T-cell (primary cell): ENCODE measurements at regions of chr1 and their contacts with region 1.

Region 1: DNA sequence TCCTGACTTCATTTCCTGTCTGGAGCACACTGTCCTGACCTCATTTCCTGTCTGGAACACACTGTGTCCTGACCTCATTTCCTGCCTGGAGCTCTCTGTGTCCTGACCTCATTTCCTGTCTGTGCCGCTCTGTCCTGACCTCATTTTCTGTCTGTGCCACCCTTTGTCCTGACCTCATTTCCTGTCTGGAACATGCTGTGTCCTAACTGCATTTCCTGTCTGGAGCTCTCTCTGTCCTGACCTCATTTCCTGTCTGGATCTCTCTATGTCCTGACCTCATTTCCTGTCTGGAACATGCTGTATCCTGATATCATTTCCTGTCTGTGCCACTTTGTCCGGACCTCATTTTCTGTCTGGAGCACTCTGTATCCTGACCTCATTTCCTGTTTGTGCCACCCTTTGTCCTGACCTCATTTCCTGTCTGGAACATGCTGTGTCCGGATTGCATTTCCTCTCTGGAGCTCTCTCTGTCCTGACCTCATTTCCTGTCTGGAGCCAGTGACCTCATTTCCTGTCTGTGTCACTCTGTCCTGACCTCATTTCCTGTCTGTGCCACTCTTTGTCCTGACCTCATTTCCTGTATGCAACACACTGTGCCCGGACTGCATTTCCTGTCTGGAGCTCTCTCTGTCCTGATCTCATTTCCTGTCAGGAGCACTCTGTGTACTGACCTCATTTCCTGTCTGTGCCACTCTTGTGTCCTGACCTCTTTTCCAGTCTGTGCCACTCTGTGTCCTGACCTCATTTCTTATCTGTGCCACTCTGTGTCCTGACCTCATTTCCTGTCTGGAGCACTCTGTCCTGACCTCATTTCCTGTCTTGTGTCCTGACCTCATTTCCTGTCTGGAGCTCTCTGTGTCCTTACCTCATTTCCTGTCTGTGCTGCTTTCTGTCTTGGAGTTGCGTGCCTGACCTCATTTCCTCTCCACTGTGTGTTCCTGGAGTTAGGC is 27.6 kb downstream of the SKI start:
- DNase-seq: peak; percentile 45 to 97 (median 87)
- ATAC-seq: peak; percentile 66 to 73 (median 66)
- H3K4me3 ChIP-seq: no peak overlapping the region
- H3K4me3 Mint-ChIP-seq: no peak overlapping the region
- H3K27ac ChIP-seq: peak overlapping the region; percentile 99
- H3K27ac Mint-ChIP-seq: no peak overlapping the region
- H3K4me1 ChIP-seq: peaks cover 29 to 93% of the 10 kb centered on the region in 2 experiments
- H3K4me1 Mint-ChIP-seq: peaks cover 56 to 60% (median 60%) of the 10 kb centered on the region in 3 donors
- H3K27me3 ChIP-seq: no peaks in the 10 kb centered on the region
- H3K27me3 Mint-ChIP-seq: no peaks in the 10 kb centered on the region

Region 2: GRCh38 chr1:2233997-2234761 is 21.5 kb before region 1 on chr1:
- CTCF ChIA-PET with region 1: interaction called in 1 of 2 experiments, 7 read pairs
- POLR2A ChIA-PET with region 1: interaction called, 3 to 16 read pairs
- DNase-seq: peak; percentile 58 to 88 (median 80)
- ATAC-seq: peak; percentile 52 to 75 (median 74)
- H3K4me3 ChIP-seq: peak overlapping the region; percentile 65 to 84
- H3K4me3 Mint-ChIP-seq: peak overlapping the region; percentile 84 to 96 (median 96)
- H3K27ac ChIP-seq: peak overlapping the region; percentile 73
- H3K27ac Mint-ChIP-seq: peak overlapping the region; percentile 98 to 99
- H3K4me1 ChIP-seq: peaks cover 48 to 100% of the 10 kb centered on the region in 2 experiments
- H3K4me1 Mint-ChIP-seq: peaks cover 70 to 83% (median 75%) of the 10 kb centered on the region in 3 donors
- H3K27me3 ChIP-seq: no peaks in the 10 kb centered on the region
- H3K27me3 Mint-ChIP-seq: no peaks in the 10 kb centered on the region

Region 3: DNA sequence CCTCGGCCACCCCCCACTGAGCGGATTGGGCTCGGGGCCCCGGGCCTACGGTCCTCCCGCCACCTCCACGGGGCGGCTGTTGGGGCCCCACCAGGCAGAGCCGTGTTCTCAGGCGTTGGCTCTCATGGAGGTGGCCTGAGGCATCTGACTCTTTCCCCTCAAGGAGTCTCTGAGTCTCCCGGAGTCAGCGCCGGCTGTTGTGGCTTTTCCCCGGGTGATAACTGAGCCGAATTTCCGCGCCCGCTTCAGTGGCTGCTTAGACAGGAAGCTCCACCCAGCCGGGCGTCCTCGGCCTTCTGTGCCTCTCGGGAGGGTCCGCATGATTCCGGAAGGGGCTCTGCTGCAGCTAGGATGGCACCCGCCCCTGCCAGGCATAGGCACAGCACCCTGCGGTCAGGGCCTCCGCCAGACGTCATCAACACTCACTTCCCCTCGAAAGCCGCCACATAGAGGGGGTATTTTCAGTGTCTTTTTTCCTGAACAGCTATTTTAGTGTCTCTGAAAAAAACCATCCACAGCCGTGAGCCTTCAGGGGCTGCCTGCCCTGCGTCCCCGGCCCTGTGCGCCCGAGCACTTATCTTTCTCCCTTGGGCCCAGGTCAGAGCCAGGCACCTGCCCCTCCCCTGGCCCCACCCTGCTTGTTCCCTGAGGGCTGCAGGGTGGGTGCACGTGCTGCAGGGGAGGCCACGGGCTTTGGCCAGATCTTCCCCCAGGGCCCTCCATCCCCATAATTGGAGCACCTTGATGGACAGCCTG is 45.3 kb after region 1 on chr1:
- CTCF ChIA-PET with region 1: interaction called in 1 of 2 experiments, 6 read pairs
- POLR2A ChIA-PET with region 1: interaction called, 3 to 25 read pairs
- DNase-seq: peak; percentile 80 to 99 (median 97)
- ATAC-seq: peak; percentile 84 to 88 (median 86)
- H3K4me3 ChIP-seq: peak overlapping the region; percentile 35 to 66
- H3K4me3 Mint-ChIP-seq: peak overlapping the region; percentile 73 to 81 (median 80)
- H3K27ac ChIP-seq: peak overlapping the region; percentile 100
- H3K27ac Mint-ChIP-seq: peak overlapping the region; percentile 90 to 95
- H3K4me1 ChIP-seq: peaks cover 34 to 92% of the 10 kb centered on the region in 2 experiments
- H3K4me1 Mint-ChIP-seq: peaks cover 49 to 68% (median 60%) of the 10 kb centered on the region in 3 donors
- H3K27me3 ChIP-seq: no peaks in the 10 kb centered on the region
- H3K27me3 Mint-ChIP-seq: no peaks in the 10 kb centered on the region

Region 4: GRCh38 chr1:2330511-2331199 is 75.0 kb after region 1 on chr1:
- CTCF ChIA-PET with region 1: no interaction called
- POLR2A ChIA-PET with region 1: no interaction called
- DNase-seq: no peak
- ATAC-seq: no peak
- H3K4me3 ChIP-seq: no peak overlapping the region
- H3K4me3 Mint-ChIP-seq: no peak overlapping the region
- H3K27ac ChIP-seq: no peak overlapping the region
- H3K27ac Mint-ChIP-seq: no peak overlapping the region
- H3K4me1 ChIP-seq: no peaks in the 10 kb centered on the region
- H3K4me1 Mint-ChIP-seq: peaks cover 0 to 4% (median 0%) of the 10 kb centered on the region in 3 donors
- H3K27me3 ChIP-seq: peaks cover 0 to 4% of the 10 kb centered on the region in 2 experiments
- H3K27me3 Mint-ChIP-seq: peaks cover 0 to 4% of the 10 kb centered on the region in 2 donors